Adrenal gland (tissue), 19 donors: ENCODE measurements at regions of chr4 and their contacts with region 1.

Region 1: GRCh38 chr4:80365928-80366327 is 30.4 kb downstream of the CFAP299 start:
- DNase-seq: peak in 1 of 7 donors; percentile 16
- H3K4me3 ChIP-seq: no peak overlapping the region
- H3K27ac ChIP-seq: no peak overlapping the region
- H3K4me1 ChIP-seq: no peaks in the 10 kb centered on the region
- H3K27me3 ChIP-seq: no peaks in the 10 kb centered on the region
- CTCF ChIP-seq: peak in 5 of 6 experiments; percentile 17 to 46 (median 35)
- POLR2A ChIP-seq: no peak

Region 2: GRCh38 chr4:80407246-80407645 is 41.3 kb after region 1 on chr4:
- intact Hi-C with region 1: no loop called
- DNase-seq: no peak
- H3K4me3 ChIP-seq: no peak overlapping the region
- H3K27ac ChIP-seq: no peak overlapping the region
- H3K4me1 ChIP-seq: no peaks in the 10 kb centered on the region
- H3K27me3 ChIP-seq: no peaks in the 10 kb centered on the region
- CTCF ChIP-seq: no peak
- POLR2A ChIP-seq: no peak

Region 3: GRCh38 chr4:80989921-80990544 is 624.1 kb after region 1 on chr4:
- intact Hi-C with region 1: loop called (anchors 5 kb)
- DNase-seq: peak in 4 of 7 donors; percentile 14 to 25 (median 22)
- H3K4me3 ChIP-seq: no peak overlapping the region
- H3K27ac ChIP-seq: no peak overlapping the region
- H3K4me1 ChIP-seq: no peaks in the 10 kb centered on the region
- H3K27me3 ChIP-seq: peaks cover 6% of the 10 kb centered on the region
- CTCF ChIP-seq: peak; percentile 41 to 75 (median 58)
- POLR2A ChIP-seq: no peak